ENCODE measurements at regions of chr6 and their contacts with region 1.

Region 1: DNA sequence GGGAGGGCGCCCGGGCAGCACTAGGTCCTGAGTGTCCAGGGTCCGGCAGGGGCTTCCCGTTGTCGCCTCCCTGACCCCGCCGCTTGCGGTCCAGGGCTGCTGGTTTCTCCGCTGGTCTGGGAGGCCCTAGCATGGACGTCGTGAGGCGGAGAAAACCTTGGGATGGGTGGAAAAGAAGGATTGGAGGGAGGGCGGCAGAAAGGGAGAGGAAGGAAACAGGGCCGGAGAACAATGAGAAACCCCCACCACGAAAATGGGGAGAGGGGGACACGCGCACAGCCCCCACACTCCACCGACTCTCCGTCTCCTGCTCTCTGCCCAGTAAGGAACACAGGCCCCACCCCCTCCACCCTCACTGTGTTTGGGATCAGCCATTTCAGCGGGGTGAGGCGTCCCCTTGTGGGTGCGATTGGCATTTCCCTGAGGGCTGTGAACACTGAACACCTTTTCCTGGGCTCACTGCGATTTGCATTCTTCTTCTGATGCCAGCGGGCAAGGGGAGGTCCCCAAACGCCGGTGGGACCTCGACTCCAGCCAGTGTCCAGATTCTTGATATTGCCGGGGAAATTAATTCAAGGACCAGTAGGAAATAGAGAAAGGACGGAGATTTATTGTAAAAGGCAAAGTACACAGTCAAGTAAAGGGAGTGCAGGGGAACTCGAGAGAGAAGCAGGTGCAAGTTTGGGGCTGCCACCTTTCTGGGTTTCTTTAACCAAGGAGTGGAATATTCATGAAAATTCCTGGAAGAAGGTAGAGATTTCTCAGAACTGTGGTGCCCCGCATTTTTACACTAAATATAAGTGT is 3.3 kb upstream of the RAET1G start:
- DNase-seq: peak; percentile 87 to 89 (median 89)
- ATAC-seq: peak; percentile 91 to 96 (median 94)
- H3K4me3 ChIP-seq: peak overlapping the region; percentile 44 to 60 (median 56)
- H3K27ac ChIP-seq: no peak overlapping the region
- H3K4me1 ChIP-seq: peaks cover 0 to 5% (median 0%) of the 10 kb centered on the region in 4 donors
- H3K27me3 ChIP-seq: peaks cover 0 to 4% of the 10 kb centered on the region in 2 donors
- CTCF ChIP-seq: peak; percentile 71 to 98 (median 78)
- POLR2A ChIP-seq: no peak

Region 2: GRCh38 chr6:149834513-149835481 is 91.4 kb before region 1 on chr6:
- intact Hi-C with region 1: loop called in 1 of 2 experiments (anchors 5 kb)
- DNase-seq: no peak
- ATAC-seq: peak; percentile 74 to 88 (median 84)
- H3K4me3 ChIP-seq: no peak overlapping the region
- H3K27ac ChIP-seq: no peak overlapping the region
- H3K4me1 ChIP-seq: no peaks in the 10 kb centered on the region
- H3K27me3 ChIP-seq: no peaks in the 10 kb centered on the region
- CTCF ChIP-seq: peak; percentile 87 to 94 (median 92)
- POLR2A ChIP-seq: no peak

Region 3: GRCh38 chr6:149840345-149841075 is 85.7 kb before region 1 on chr6:
- intact Hi-C with region 1: loop called (anchors 5 kb)
- DNase-seq: peak; percentile 72 to 85 (median 77)
- ATAC-seq: peak; percentile 96 to 98 (median 96)
- H3K4me3 ChIP-seq: no peak overlapping the region
- H3K27ac ChIP-seq: peak overlapping the region in 1 of 3 donors; percentile 6
- H3K4me1 ChIP-seq: peaks cover 0 to 10% (median 0%) of the 10 kb centered on the region in 4 donors
- H3K27me3 ChIP-seq: no peaks in the 10 kb centered on the region
- CTCF ChIP-seq: peak; percentile 57 to 79 (median 66)
- POLR2A ChIP-seq: no peak

Region 4: DNA sequence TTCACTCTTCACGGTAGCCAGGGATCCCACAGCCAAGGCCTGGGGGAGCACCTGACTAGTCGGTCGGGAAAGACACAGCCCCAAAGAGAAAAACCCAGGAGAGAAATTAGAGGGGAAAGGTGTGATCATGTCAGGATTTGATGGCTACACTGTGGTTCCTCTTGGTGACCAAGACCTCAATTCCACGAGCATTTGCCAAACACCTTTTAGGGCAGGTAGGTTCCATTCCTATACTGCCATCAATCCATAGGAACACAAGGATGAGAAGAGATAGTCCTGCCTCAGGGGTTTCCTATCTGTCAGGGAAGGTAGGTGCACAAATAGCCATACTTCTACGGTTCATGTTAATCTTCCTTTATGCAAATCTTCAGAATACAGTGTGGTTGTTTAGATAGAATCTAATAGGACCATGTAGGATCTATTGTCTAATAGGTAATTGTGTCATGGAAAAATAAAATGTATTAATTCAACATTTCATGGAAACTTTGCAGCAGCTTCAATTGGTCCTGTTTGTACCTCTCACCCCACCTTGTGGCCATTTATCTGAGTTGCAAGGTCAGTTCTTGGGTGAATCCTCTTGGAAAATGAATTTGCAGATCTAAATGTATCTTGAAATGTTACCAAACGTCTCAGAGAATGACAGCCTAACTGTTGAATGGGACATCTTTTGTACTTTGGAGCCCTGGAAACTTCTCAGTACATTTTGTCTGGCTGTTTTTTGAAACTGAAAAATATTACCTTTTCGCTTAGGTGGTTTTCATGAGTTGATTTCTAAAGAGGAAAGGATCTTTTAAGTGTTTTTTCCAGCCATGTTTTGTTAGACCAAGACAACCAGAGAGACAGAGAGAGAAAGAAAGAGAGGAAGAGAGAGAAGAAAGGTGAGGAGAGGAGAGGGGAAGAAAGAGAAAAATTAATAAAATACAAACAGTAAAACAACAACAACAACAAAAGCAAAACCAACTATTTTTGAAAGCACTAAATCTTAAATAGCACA is 408.9 kb after region 1 on chr6:
- intact Hi-C with region 1: no loop called
- DNase-seq: no peak
- ATAC-seq: peak; percentile 62 to 70 (median 66)
- H3K4me3 ChIP-seq: no peak overlapping the region
- H3K27ac ChIP-seq: no peak overlapping the region
- H3K4me1 ChIP-seq: no peaks in the 10 kb centered on the region
- H3K27me3 ChIP-seq: no peaks in the 10 kb centered on the region
- CTCF ChIP-seq: peak; percentile 77 to 89 (median 82)
- POLR2A ChIP-seq: no peak